Heart right ventricle (tissue), 16 donors: ENCODE measurements at regions of chr17 and their contacts with region 1.

Region 1: GRCh38 chr17:60036796-60037612 is 41.7 kb downstream of the HEATR6 start:
- DNase-seq: peak; percentile 48 to 60
- ATAC-seq: peak; percentile 55 to 95 (median 84)
- H3K4me3 ChIP-seq: no peak overlapping the region
- H3K27ac ChIP-seq: no peak overlapping the region
- H3K4me1 ChIP-seq: peaks cover 0 to 8% (median 0%) of the 10 kb centered on the region in 9 donors
- H3K27me3 ChIP-seq: peaks cover 0 to 22% (median 6%) of the 10 kb centered on the region in 7 donors
- CTCF ChIP-seq: peak; percentile 74 to 94 (median 90)

Region 2: DNA sequence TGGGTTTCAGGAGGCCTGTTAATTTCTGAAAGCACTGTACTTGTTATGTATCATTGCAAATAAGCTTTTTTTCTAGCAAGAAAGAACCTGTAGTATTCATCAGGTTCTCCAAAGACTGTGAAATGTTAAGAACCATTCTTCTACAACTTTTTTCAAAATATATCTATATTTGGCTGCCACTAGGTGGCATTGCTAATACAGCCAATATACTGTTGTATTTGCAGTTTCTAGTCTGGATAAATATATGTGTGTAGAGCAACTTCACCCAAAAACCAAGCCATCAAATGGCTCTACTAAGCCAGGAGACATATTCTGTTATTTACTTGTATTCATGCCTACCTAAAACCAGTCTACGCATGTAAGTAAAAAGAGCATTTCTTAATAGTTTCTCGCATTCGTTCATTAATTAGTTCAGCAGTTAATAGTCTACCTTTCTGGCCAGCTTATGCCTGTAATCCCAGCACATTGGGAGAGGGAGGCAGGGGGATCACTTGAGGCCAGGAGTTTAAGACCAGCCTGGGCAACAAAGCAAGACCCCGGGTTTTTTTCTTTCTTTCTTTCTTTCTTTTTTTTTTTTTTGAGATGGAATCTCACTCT is 290.1 kb before region 1 on chr17:
- intact Hi-C with region 1: loop called in 3 of 10 experiments (anchors 5 to 10 kb)
- DNase-seq: no peak
- ATAC-seq: peak in 2 of 8 donors; percentile 16 to 42
- H3K4me3 ChIP-seq: no peak overlapping the region
- H3K27ac ChIP-seq: no peak overlapping the region
- H3K4me1 ChIP-seq: peaks cover 0 to 11% (median 0%) of the 10 kb centered on the region in 9 donors
- H3K27me3 ChIP-seq: no peaks in the 10 kb centered on the region
- CTCF ChIP-seq: peak; percentile 14 to 77 (median 67)

Region 3: DNA sequence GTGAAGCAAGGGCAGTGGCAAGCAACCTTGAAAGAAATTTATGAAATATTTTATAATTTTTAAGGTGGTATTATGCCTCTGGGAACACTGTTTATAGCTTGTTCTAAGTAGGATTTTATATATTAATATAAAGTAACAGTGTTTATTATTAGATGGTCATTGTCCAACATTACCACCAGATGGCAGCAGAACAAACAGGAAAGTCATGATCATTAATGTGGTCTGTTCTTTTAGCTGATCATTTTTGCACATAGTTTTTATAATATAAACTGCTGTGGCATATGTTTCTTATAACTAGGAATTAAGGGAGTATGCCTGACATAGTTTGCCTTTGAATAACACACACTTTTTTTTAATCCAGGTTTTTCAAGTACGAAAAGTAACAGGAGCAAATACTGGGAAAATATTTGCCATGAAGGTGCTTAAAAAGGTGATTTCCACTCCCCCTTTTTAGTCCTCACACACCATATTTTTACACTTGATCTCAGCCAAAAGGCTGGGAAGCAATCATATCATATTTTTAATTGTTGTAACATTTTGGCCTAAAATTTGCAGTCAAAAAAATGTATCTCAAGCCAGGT is 122.6 kb before region 1 on chr17:
- intact Hi-C with region 1: loop called in 7 of 10 experiments (anchors 5 to 10 kb)
- DNase-seq: no peak
- ATAC-seq: peak in 1 of 8 donors; percentile 35
- H3K4me3 ChIP-seq: no peak overlapping the region
- H3K27ac ChIP-seq: no peak overlapping the region
- H3K4me1 ChIP-seq: no peaks in the 10 kb centered on the region
- H3K27me3 ChIP-seq: no peaks in the 10 kb centered on the region
- CTCF ChIP-seq: peak; percentile 47 to 79 (median 72)

Region 4: GRCh38 chr17:59941131-59941530 is 95.9 kb before region 1 on chr17:
- intact Hi-C with region 1: loop called in 1 of 10 experiments (anchors 10 kb)
- DNase-seq: no peak
- ATAC-seq: no peak
- H3K4me3 ChIP-seq: no peak overlapping the region
- H3K27ac ChIP-seq: no peak overlapping the region
- H3K4me1 ChIP-seq: no peaks in the 10 kb centered on the region
- H3K27me3 ChIP-seq: no peaks in the 10 kb centered on the region
- CTCF ChIP-seq: no peak

Region 5: DNA sequence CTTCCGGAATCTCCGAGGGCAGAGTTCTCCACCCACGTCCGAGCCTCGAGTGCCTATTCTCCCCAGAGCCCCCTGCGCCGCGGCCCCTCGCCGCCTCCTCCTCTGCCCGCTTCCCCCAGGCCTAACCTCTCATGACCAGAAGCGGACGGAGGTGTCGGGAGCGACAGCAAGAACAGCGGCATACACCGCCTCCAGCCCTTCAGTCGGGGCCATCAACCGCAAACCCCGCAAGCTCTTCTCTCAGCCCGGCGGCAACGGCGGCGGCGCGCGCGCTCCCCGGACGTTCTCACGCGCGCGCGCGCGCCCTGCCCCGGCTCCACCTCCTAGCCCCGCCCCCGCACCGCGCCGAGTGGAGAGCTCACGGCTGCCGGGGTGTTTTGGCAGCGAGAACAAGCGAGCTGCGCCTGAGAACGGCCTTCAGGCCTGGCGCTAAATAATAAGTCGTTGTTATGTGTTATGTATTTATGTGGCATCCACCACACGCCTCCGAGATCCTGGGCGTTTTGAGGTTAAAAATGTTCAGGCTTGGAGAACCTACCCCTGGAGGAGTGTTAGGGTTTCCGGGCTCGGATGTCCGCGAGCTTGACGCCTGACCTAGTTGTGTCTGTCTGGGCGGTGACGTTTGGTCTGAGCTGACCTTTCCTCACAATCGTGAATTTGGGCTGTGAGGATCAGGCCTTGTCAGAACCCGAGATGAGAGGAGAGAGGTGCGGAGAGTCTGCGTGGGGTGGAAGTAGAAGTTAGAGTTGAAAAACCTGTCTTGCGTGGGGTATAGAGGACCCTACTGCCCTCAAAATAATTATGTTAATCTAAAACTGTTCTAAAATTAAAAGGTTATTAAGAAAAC is 72.3 kb before region 1 on chr17 and contains the start of gene RNFT1:
- intact Hi-C with region 1: loop called in 3 of 10 experiments (anchors 5 to 10 kb)
- DNase-seq: peak; percentile 92 to 93
- ATAC-seq: peak; percentile 97 to 99 (median 98)
- H3K4me3 ChIP-seq: peak within 1 kb of the TSS; percentile 51 to 98 (median 78)
- H3K27ac ChIP-seq: peak within 1 kb of the TSS; percentile 48 to 98 (median 94)
- H3K4me1 ChIP-seq: peaks cover 5 to 32% (median 17%) of the 10 kb centered on the region in 9 donors
- H3K27me3 ChIP-seq: no peaks in the 10 kb centered on the region
- CTCF ChIP-seq: no peak
- total RNA-seq, gene RNFT1: 5.8 to 12.5 (median 8.4) TPM

Region 6: GRCh38 chr17:60006124-60006523 is 30.9 kb before region 1 on chr17:
- intact Hi-C with region 1: no loop called
- DNase-seq: no peak
- ATAC-seq: no peak
- H3K4me3 ChIP-seq: no peak overlapping the region
- H3K27ac ChIP-seq: no peak overlapping the region
- H3K4me1 ChIP-seq: no peaks in the 10 kb centered on the region
- H3K27me3 ChIP-seq: no peaks in the 10 kb centered on the region
- CTCF ChIP-seq: no peak

Region 7: DNA sequence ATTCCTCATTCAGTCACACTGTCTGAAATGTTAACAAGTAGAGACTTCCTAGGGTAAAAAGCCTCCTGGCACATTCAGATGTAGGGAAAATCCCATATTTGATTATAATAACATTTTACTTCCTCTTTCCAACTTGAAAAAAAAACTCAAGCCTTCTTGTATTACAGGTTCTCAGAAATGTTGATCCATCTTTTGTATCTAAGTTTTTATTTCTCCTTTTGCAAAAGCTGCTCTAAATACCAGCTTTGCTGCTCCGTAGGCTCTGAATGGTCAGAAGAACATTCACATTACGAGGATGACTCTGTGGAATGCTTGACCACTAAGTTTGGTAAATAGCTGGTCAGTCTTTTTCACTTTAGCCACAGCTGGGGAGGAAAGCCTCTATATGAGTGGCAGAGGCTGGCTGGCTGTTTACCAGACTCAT is 54.9 kb after region 1 on chr17:
- intact Hi-C with region 1: no loop called
- DNase-seq: no peak
- ATAC-seq: no peak
- H3K4me3 ChIP-seq: no peak overlapping the region
- H3K27ac ChIP-seq: peak overlapping the region in 1 of 10 donors; percentile 84
- H3K4me1 ChIP-seq: peaks cover 0 to 66% (median 0%) of the 10 kb centered on the region in 9 donors
- H3K27me3 ChIP-seq: no peaks in the 10 kb centered on the region
- CTCF ChIP-seq: no peak